ENCODE measurements at regions of chr5 and their contacts with region 1.

Region 1: GRCh38 chr5:122896598-122897282 is 51.3 kb downstream of the SNX24 start:
- DNase-seq: peak in 1 of 2 experiments; percentile 20
- H3K4me3 ChIP-seq: no peak overlapping the region
- H3K4me3 Mint-ChIP-seq: no peak overlapping the region
- H3K27ac Mint-ChIP-seq: no peak overlapping the region
- H3K4me1 ChIP-seq: peaks cover 7% of the 10 kb centered on the region
- H3K4me1 Mint-ChIP-seq: peaks cover 6% of the 10 kb centered on the region
- H3K27me3 ChIP-seq: no peaks in the 10 kb centered on the region
- H3K27me3 Mint-ChIP-seq: no peaks in the 10 kb centered on the region
- CTCF ChIP-seq: peak; percentile 69 to 70

Region 2: GRCh38 chr5:122943050-122943698 is 46.4 kb after region 1 on chr5:
- CTCF ChIA-PET with region 1: no interaction called
- POLR2A ChIA-PET with region 1: no interaction called
- intact Hi-C with region 1: no loop called
- DNase-seq: no peak
- H3K4me3 ChIP-seq: no peak overlapping the region
- H3K4me3 Mint-ChIP-seq: no peak overlapping the region
- H3K27ac Mint-ChIP-seq: no peak overlapping the region
- H3K4me1 ChIP-seq: no peaks in the 10 kb centered on the region
- H3K4me1 Mint-ChIP-seq: peaks cover 18% of the 10 kb centered on the region
- H3K27me3 ChIP-seq: no peaks in the 10 kb centered on the region
- H3K27me3 Mint-ChIP-seq: no peaks in the 10 kb centered on the region
- CTCF ChIP-seq: no peak

Region 3: DNA sequence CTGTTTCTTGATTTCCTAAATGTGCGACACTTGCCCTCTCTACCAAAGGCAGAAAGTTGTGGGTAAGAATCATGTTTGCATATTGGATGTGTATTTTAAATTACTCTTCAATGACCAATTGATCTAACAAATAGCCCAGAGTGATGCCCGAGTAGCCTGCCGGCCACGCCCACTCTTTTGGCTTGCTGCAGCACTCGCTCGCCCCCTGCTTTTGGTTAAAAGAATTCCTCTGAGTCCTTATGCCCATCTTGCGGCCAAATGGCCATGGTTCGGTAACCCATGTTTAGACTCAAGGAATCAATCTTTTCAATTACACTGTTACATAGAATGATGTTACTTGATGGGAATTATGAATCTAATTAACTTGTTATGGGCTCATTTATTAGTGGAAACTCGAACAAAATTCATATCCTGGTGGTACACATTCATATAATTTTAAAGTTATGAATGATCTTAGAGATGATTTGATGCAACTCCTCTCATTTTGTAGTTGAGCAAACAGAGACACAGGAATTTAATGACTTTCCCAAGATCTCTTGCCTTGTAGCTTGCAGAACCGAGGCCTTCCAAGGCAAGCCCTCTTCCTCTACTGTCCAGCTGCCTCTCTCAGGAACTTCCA is 103.3 kb after region 1 on chr5:
- CTCF ChIA-PET with region 1: no interaction called
- POLR2A ChIA-PET with region 1: no interaction called
- intact Hi-C with region 1: loop called (anchors 2 kb)
- DNase-seq: peak in 1 of 2 experiments; percentile 55
- H3K4me3 ChIP-seq: no peak overlapping the region
- H3K4me3 Mint-ChIP-seq: no peak overlapping the region
- H3K27ac Mint-ChIP-seq: no peak overlapping the region
- H3K4me1 ChIP-seq: no peaks in the 10 kb centered on the region
- H3K4me1 Mint-ChIP-seq: no peaks in the 10 kb centered on the region
- H3K27me3 ChIP-seq: no peaks in the 10 kb centered on the region
- H3K27me3 Mint-ChIP-seq: no peaks in the 10 kb centered on the region
- CTCF ChIP-seq: peak; percentile 38 to 44

Region 4: DNA sequence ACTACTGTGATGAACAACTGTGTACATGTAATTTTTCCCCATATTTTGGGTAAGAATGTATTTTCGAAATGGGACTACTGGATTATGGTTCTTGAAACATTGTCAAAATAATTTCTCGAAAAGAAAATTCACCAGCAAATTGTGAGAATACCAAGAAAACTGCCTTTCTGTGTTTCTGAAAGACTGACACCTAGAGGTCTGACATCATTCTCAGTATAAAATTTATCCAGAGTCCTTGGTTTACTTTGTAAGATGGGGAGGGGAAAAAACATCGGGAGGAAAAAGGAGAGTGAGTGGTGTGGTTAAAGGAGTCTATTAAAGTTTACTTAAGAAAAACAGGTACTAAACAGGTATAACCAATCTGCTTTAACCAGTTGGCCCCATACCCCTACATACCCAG is 377.2 kb after region 1 on chr5:
- CTCF ChIA-PET with region 1: no interaction called
- POLR2A ChIA-PET with region 1: no interaction called
- intact Hi-C with region 1: loop called (anchors 5 kb)
- DNase-seq: no peak
- H3K4me3 ChIP-seq: no peak overlapping the region
- H3K4me3 Mint-ChIP-seq: no peak overlapping the region
- H3K27ac Mint-ChIP-seq: no peak overlapping the region
- H3K4me1 ChIP-seq: no peaks in the 10 kb centered on the region
- H3K4me1 Mint-ChIP-seq: no peaks in the 10 kb centered on the region
- H3K27me3 ChIP-seq: no peaks in the 10 kb centered on the region
- H3K27me3 Mint-ChIP-seq: no peaks in the 10 kb centered on the region
- CTCF ChIP-seq: no peak

Region 5: DNA sequence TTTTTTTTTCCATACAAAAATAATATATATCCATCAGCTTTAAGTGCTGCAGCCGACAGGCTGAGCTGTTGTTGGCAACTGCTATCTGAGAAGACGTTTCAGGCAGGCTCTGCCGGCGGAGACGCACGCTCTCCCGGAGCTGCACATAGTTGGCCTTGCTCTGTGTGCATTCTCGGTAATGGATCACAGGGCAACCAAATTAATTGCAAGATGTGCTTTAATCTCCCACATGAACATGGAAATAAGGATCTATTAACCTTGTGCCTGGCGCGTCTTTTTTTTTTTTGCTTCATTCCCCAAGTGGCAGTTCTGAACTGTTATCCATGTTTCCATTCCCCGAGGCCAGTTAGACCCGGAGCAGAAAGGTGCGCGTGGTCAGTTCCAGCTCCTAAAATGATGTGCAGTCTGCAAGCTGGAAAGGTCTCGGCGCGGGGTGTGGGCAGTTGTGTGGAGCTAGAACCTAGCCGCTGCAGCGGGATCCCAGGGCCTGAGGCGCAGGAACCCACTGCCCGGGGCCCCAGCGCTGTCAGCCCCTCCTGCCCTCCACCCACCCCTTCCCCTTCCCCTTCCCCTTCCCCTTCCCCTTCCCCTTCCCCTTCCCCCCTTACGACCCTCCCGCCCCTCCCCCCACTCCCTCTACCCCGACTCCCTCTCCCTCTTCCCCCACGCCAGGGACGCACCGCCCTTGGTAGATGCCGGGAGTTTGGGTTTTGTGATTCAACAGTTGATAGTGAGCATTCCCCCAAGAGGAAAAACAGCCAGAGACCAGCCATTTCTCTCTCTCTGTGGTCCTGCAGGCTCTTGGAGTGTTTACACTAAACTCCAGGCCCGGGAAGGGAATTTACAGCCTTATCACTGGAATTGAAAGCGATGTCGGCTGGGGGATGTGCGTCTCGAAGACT is 388.6 kb after region 1 on chr5:
- CTCF ChIA-PET with region 1: no interaction called
- POLR2A ChIA-PET with region 1: no interaction called
- intact Hi-C with region 1: no loop called
- DNase-seq: peak; percentile 3 to 29
- H3K4me3 ChIP-seq: no peak overlapping the region
- H3K4me3 Mint-ChIP-seq: peak overlapping the region; percentile 54
- H3K27ac Mint-ChIP-seq: no peak overlapping the region
- H3K4me1 ChIP-seq: no peaks in the 10 kb centered on the region
- H3K4me1 Mint-ChIP-seq: no peaks in the 10 kb centered on the region
- H3K27me3 ChIP-seq: no peaks in the 10 kb centered on the region; the same call in 1 of the 2 replicates
- H3K27me3 Mint-ChIP-seq: peaks cover 10% of the 10 kb centered on the region
- CTCF ChIP-seq: no peak

Region 6: DNA sequence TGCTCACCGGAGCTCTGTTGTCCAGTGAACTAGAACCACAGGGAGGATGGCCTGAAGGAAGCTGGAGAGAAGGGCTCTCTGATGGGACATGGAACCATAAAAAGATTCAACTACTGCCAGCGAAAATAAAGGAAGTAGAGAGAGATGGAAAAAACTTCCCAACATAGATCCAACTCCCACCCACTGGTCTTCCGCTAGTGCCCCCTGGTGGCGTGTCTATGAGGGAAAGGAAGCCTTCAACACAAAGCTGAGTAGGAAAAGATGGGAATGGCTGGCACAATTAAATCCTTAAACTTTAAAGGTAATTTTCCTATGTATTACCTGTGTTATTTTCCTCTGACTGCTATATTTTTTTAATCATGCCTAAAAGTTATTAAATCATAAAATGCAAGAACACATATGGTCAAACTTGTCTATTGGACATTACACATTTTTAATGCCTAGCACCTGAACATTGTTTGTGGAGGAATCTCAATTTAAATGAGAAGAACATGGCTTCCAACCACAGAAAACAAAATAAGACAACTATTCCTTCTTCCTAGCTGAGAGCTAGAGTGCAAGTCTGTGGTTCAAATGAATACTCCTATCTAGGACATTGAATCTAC is 474.9 kb after region 1 on chr5:
- CTCF ChIA-PET with region 1: no interaction called
- POLR2A ChIA-PET with region 1: no interaction called
- intact Hi-C with region 1: loop called (anchors 5 kb)
- DNase-seq: peak; percentile 49 to 69
- H3K4me3 ChIP-seq: no peak overlapping the region
- H3K4me3 Mint-ChIP-seq: no peak overlapping the region
- H3K27ac Mint-ChIP-seq: no peak overlapping the region
- H3K4me1 ChIP-seq: peaks cover 20% of the 10 kb centered on the region
- H3K4me1 Mint-ChIP-seq: peaks cover 16% of the 10 kb centered on the region
- H3K27me3 ChIP-seq: no peaks in the 10 kb centered on the region
- H3K27me3 Mint-ChIP-seq: no peaks in the 10 kb centered on the region
- CTCF ChIP-seq: peak; percentile 36 to 49

Measured in Caco-2 (cell line).